ENCODE measurements at regions of chrX and their contacts with region 1.

Region 1: DNA sequence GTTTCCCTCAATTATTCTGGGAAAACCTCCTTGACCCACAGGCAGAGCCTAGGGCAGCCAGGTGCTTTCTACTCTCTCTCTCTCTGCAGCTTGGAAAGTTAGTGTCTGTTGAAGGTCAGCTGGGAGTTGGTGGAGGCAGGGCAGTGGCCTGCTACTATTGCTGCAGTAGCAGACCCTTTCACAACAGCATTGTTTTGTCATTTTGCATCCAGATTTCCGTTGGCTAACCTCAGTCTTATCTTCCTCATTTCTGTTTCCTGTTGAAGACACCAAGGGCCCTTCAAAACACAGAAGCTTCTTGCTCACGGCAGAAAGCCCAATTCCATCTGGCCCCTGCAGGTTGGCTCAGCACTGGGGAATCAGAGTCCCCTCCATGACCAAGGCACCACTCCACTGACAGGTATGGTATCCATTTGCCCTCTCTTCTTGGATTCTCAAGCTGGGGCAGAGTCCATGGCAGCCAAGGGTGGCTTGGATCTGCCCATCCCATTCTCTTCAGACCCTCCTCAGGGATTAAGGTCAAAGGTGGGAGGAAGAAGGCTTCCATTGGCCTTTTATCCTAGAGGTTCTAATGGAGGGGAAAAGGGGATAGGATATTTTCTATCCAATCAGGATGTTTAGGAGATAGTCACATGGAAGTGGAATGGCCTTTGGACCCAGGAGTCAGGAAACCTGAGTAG is 24.6 kb downstream of the VSIG4 start:
- DNase-seq: peak; percentile 88 to 91 (median 90)
- H3K4me3 ChIP-seq: peak overlapping the region; percentile 70 to 100 (median 92)
- H3K4me3 Mint-ChIP-seq: peak overlapping the region; percentile 83 to 95
- H3K27ac ChIP-seq: peak overlapping the region; percentile 70 to 90
- H3K27ac Mint-ChIP-seq: peak overlapping the region; percentile 92 to 98 (median 98)
- H3K4me1 ChIP-seq: peaks cover 67 to 100% of the 10 kb centered on the region in 2 donors
- H3K4me1 Mint-ChIP-seq: peaks cover 65% of the 10 kb centered on the region
- H3K27me3 ChIP-seq: no peaks in the 10 kb centered on the region
- H3K27me3 Mint-ChIP-seq: peaks cover 0 to 1% (median 0%) of the 10 kb centered on the region in 3 donors
- CTCF ChIP-seq: no peak

Region 2: DNA sequence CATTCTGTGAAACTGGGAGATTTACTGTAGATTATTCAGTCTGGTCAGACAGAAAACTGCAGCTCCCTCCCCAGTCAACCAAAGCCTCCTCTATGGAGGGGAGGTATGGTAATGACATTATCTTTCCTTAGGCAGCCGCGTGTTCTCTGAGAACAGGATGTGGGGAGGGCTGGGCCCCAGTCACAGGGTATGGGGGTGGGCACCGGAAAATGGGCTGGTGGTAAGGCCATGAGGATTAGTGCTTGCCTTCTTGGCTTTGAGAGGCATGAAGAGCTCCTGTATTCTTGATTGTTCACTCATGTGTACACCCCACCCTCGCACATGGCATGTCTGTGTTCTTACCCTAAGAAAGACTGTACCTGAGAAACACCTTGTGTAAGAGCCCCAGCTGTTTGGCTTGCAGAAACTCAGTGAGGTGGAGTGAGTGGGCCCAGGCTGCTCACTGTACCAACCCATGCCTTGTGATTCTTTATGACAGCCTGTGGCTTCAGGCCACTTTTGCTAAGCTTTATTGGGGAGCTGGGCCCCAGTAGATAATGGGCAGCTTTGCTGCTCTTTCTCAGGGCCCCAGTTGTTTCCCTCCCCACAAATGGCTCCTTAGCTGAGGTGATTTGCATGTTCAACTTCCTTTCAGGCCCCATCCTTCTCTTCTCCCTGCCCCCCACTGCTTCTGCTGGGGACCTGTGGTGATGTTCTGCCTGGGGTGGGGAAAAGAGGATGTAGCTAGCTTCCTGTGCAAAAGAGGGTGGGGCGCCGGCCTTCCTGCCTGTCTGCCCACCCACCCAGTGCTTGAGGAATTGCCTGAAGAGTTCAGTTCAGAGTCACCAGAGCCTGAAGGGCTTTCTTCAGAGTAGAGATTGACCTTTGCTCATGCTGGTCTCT is 317.1 kb before region 1 on chrX:
- intact Hi-C with region 1: loop called in 1 of 2 experiments (anchors 10 kb)
- DNase-seq: peak; percentile 56 to 67 (median 58)
- H3K4me3 ChIP-seq: peak overlapping the region in 2 of 3 experiments; percentile 4 to 65
- H3K4me3 Mint-ChIP-seq: peak overlapping the region; percentile 62 to 67
- H3K27ac ChIP-seq: peak overlapping the region; percentile 70 to 76
- H3K27ac Mint-ChIP-seq: peak overlapping the region; percentile 85 to 95 (median 93)
- H3K4me1 ChIP-seq: peaks cover 97 to 98% of the 10 kb centered on the region in 2 donors
- H3K4me1 Mint-ChIP-seq: peaks cover 93% of the 10 kb centered on the region
- H3K27me3 ChIP-seq: no peaks in the 10 kb centered on the region
- H3K27me3 Mint-ChIP-seq: peaks cover 0 to 10% (median 0%) of the 10 kb centered on the region in 3 donors
- CTCF ChIP-seq: no peak

Region 3: GRCh38 chrX:66046612-66047235 is 31.4 kb after region 1 on chrX:
- intact Hi-C with region 1: loop called in 1 of 2 experiments (anchors 5 kb)
- DNase-seq: peak; percentile 54 to 76 (median 67)
- H3K4me3 ChIP-seq: peak overlapping the region in 1 of 3 experiments; percentile 34
- H3K4me3 Mint-ChIP-seq: no peak overlapping the region
- H3K27ac ChIP-seq: peak overlapping the region in 1 of 2 donors; percentile 62
- H3K27ac Mint-ChIP-seq: peak overlapping the region; percentile 61 to 87 (median 80)
- H3K4me1 ChIP-seq: peaks cover 50 to 64% of the 10 kb centered on the region in 2 donors
- H3K4me1 Mint-ChIP-seq: peaks cover 48% of the 10 kb centered on the region
- H3K27me3 ChIP-seq: peaks cover 0 to 2% of the 10 kb centered on the region in 2 donors
- H3K27me3 Mint-ChIP-seq: peaks cover 0 to 15% (median 2%) of the 10 kb centered on the region in 3 donors
- CTCF ChIP-seq: no peak

Region 4: DNA sequence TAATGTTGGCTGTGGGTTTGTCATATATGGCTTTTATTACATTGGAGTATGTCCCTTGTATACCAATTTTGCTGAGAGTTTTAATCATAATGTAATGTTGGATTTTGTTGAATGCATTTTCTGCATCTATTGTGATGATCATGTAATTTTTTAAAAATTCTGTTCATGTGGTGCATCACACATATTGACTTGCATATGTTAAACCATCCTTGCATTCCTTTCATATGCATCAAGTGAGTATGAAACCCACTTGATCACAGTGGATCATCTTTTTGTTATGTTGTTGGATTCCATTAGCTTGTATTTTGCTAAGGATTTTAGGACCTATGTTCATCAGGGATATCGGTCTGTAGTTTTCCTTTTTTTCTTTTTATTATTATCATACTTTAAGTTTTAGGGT is 160.8 kb after region 1 on chrX:
- intact Hi-C with region 1: no loop called
- DNase-seq: no peak
- H3K4me3 ChIP-seq: no peak overlapping the region
- H3K4me3 Mint-ChIP-seq: no peak overlapping the region
- H3K27ac ChIP-seq: no peak overlapping the region
- H3K27ac Mint-ChIP-seq: no peak overlapping the region
- H3K4me1 ChIP-seq: no peaks in the 10 kb centered on the region
- H3K4me1 Mint-ChIP-seq: no peaks in the 10 kb centered on the region
- H3K27me3 ChIP-seq: peaks cover 0 to 12% of the 10 kb centered on the region in 2 donors
- H3K27me3 Mint-ChIP-seq: no peaks in the 10 kb centered on the region
- CTCF ChIP-seq: no peak

Measured in CD14-positive monocyte (primary cell).